Activated naive CD4-positive, alpha-beta T cell treated with anti-CD3 and anti-CD28 coated beads for 36 hours (primary cell): ENCODE measurements at regions of chr1 and their contacts with region 1.

Region 1: GRCh38 chr1:179882243-179883039 is at the start of gene TOR1AIP1:
- DNase-seq: peak; percentile 98
- H3K4me3 Mint-ChIP-seq: peak within 1 kb of the TSS; percentile 96
- H3K27ac Mint-ChIP-seq: peak within 1 kb of the TSS; percentile 99
- H3K4me1 Mint-ChIP-seq: peaks cover 57% of the 10 kb centered on the region
- H3K27me3 Mint-ChIP-seq: no peaks in the 10 kb centered on the region
- total RNA-seq, gene TOR1AIP1: 39.4 to 42.3 TPM

Region 2: GRCh38 chr1:179293340-179294327 is 588.8 kb before region 1 on chr1 and contains the start of gene SOAT1:
- CTCF ChIA-PET with region 1: no interaction called
- intact Hi-C with region 1: loop called (anchors 2 kb)
- DNase-seq: peak; percentile 93
- H3K4me3 Mint-ChIP-seq: peak within 1 kb of the TSS; percentile 93
- H3K27ac Mint-ChIP-seq: peak within 1 kb of the TSS; percentile 89
- H3K4me1 Mint-ChIP-seq: peaks cover 44% of the 10 kb centered on the region
- H3K27me3 Mint-ChIP-seq: no peaks in the 10 kb centered on the region
- total RNA-seq, gene SOAT1: 38.8 to 42.4 TPM

Region 3: GRCh38 chr1:179754042-179754624 is 128.3 kb before region 1 on chr1:
- CTCF ChIA-PET with region 1: no interaction called
- intact Hi-C with region 1: no loop called
- DNase-seq: no peak
- H3K4me3 Mint-ChIP-seq: no peak overlapping the region
- H3K27ac Mint-ChIP-seq: no peak overlapping the region
- H3K4me1 Mint-ChIP-seq: no peaks in the 10 kb centered on the region
- H3K27me3 Mint-ChIP-seq: peaks cover 7% of the 10 kb centered on the region

Region 4: DNA sequence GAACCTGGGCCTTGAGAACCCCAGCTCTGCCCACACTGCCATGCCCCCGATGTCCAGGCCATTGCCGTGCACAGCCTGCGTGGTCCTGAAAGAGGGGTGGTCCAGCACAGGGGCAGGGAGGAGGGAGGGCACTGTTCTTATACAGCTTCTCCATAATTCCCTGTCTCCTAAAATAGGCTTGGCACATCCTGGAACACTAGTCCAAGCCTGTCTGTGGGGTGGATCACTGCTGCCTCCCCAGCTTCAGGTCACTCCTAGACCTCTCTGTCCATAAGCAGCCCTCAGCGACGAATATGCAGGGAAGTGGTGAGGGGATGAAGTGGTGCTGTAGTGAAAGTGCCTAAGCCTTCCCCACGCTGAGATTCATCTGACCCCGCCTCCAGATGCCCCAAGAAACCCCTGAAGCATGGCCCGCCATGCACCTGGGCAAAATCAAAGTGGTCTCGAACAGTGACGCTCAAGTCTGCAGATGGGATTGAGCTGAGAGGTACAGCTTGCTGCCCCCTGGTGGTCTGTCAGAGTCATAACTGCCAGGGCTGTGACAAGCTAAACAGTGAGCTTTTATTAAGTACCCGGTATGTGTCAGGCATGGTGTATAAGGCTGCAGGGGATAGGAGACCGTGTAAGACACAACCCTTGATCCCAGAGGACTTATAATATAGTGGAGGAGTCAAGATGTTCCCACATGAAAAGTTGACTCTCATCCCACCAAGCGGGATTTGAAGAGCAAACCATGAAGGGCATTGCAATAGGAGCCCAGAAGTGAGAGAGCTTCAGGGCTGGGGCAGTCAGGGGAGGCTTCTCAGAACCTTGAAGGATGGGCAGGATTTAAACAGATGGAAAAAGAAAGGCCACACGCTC is 72.7 kb before region 1 on chr1:
- CTCF ChIA-PET with region 1: interaction called, 9 read pairs
- intact Hi-C with region 1: loop called (anchors 1 kb)
- DNase-seq: peak; percentile 81
- H3K4me3 Mint-ChIP-seq: no peak overlapping the region
- H3K27ac Mint-ChIP-seq: no peak overlapping the region
- H3K4me1 Mint-ChIP-seq: peaks cover 10% of the 10 kb centered on the region
- H3K27me3 Mint-ChIP-seq: no peaks in the 10 kb centered on the region

Region 5: GRCh38 chr1:179954493-179955297 is 72.3 kb after region 1 on chr1 and contains the start of gene CEP350:
- CTCF ChIA-PET with region 1: interaction called, 3 read pairs
- intact Hi-C with region 1: loop called (anchors 1 kb)
- DNase-seq: peak; percentile 99
- H3K4me3 Mint-ChIP-seq: peak within 1 kb of the TSS; percentile 85
- H3K27ac Mint-ChIP-seq: peak within 1 kb of the TSS; percentile 95
- H3K4me1 Mint-ChIP-seq: peaks cover 41% of the 10 kb centered on the region
- H3K27me3 Mint-ChIP-seq: no peaks in the 10 kb centered on the region
- total RNA-seq, gene CEP350: 30.3 to 36.0 TPM

Region 6: GRCh38 chr1:180229152-180229973 is 346.9 kb after region 1 on chr1:
- CTCF ChIA-PET with region 1: no interaction called
- intact Hi-C with region 1: loop called (anchors 5 kb)
- DNase-seq: peak; percentile 14
- H3K4me3 Mint-ChIP-seq: peak overlapping the region; percentile 66
- H3K27ac Mint-ChIP-seq: no peak overlapping the region
- H3K4me1 Mint-ChIP-seq: peaks cover 26% of the 10 kb centered on the region
- H3K27me3 Mint-ChIP-seq: peaks cover 66% of the 10 kb centered on the region

Region 7: DNA sequence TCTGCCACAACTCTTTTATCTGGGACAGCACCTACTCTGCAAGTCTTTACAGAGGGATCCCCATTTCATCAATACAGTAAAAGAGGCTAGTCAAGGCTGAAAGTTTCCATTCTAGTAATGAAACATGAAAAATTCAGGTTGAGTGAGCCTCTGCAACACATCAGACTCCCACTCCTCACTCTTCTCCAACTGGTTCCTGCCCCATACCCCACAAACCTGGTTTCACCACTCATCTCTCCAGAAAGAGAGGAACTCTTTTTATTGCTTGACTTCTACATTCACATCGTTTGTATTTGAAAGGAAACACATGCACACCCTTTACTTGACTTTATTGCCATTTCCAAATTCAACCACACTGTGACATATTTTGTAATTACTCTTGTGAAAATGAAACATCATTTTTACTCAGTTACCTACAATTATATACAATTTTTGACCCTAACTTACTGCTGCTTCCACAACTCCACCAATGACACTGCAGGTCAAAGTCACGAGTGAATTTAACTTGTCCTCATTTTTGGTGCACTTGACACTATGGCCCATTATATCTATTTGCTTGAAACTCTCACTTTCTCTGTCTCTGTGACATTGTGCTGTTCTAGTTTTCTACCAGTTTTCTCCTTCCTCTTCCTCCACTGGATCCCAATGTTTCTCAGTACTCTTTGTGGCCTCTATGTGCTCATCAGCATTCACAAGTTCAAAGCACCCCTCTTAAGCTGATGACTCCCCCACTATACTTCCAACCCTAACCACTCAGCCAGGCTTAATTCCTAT is 1132.2 kb after region 1 on chr1:
- CTCF ChIA-PET with region 1: no interaction called
- intact Hi-C with region 1: loop called (anchors 2 kb)
- DNase-seq: peak; percentile 33
- H3K4me3 Mint-ChIP-seq: no peak overlapping the region
- H3K27ac Mint-ChIP-seq: no peak overlapping the region
- H3K4me1 Mint-ChIP-seq: peaks cover 43% of the 10 kb centered on the region
- H3K27me3 Mint-ChIP-seq: no peaks in the 10 kb centered on the region